AG04450 (cell line): ENCODE measurements at regions of chr9 and their contacts with region 1.

Region 1: DNA sequence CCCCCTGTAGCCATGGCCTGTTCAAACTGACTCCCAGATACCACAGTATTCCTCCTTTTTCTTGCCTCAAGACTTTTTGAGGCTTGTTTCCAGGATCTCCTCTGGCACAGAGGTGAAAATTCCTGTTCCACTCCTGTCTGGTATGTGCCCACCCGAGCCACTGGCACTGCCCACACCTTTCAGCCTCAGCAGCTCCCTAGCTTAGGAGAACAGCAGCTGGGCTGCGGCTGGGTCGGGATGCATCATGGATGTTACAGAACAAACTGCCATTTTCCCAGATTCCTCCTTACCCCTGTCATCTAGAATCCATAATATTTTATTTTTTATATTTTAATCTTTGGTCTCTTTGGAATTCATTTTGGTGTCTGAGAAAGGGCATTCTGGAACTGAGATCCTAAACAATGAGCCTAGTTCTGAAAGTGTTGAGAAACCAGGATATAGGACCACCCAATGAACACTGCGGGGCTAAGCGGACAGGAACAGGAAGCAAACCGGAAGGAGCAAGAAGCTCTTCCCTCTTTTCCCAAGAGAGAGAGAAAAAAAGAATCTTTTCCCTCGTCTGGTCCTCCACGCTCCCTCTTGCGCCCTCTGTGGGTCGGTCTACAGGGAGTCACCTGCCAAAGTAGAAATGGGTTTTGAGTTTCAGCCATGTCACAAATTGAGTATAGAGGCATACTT is 12.5 kb downstream of the OR2S2 start:
- DNase-seq: peak; percentile 63
- H3K4me3 ChIP-seq: no peak overlapping the region
- H3K27ac ChIP-seq: peak overlapping the region; percentile 22
- H3K27me3 ChIP-seq: no peaks in the 10 kb centered on the region
- CTCF ChIP-seq: peak; percentile 96

Region 2: DNA sequence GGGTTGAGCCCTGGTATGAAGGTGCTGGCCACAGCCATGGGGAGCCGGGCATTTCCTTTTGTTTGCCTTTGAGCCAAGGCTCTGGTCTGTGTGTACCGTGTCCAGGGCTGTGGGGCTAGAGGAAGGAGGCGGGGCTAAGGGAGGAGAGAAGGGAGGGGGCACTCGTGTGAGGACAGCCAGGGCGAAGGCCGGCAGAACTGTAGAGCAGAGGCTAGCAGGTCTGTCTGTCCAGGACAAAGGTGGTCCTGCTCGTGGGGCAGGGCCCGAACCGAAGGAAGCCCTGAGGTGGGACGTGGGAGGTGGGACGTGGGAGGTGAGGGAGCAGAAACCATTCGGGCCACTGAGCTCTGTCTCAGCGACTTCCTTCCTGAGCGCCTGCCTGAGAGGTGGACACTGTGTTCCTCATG is 381.7 kb before region 1 on chr9:
- CTCF ChIA-PET with region 1: no interaction called
- POLR2A ChIA-PET with region 1: no interaction called
- DNase-seq: no peak
- H3K4me3 ChIP-seq: no peak overlapping the region
- H3K27ac ChIP-seq: no peak overlapping the region
- H3K27me3 ChIP-seq: no peaks in the 10 kb centered on the region
- CTCF ChIP-seq: no peak

Region 3: GRCh38 chr9:35790385-35791296 is 154.8 kb before region 1 on chr9:
- CTCF ChIA-PET with region 1: interaction called, 35 read pairs
- POLR2A ChIA-PET with region 1: interaction called, 4 read pairs
- DNase-seq: peak; percentile 65
- H3K4me3 ChIP-seq: no peak overlapping the region
- H3K27ac ChIP-seq: peak overlapping the region; percentile 31
- H3K27me3 ChIP-seq: peaks cover 3% of the 10 kb centered on the region
- CTCF ChIP-seq: peak; percentile 91

Region 4: DNA sequence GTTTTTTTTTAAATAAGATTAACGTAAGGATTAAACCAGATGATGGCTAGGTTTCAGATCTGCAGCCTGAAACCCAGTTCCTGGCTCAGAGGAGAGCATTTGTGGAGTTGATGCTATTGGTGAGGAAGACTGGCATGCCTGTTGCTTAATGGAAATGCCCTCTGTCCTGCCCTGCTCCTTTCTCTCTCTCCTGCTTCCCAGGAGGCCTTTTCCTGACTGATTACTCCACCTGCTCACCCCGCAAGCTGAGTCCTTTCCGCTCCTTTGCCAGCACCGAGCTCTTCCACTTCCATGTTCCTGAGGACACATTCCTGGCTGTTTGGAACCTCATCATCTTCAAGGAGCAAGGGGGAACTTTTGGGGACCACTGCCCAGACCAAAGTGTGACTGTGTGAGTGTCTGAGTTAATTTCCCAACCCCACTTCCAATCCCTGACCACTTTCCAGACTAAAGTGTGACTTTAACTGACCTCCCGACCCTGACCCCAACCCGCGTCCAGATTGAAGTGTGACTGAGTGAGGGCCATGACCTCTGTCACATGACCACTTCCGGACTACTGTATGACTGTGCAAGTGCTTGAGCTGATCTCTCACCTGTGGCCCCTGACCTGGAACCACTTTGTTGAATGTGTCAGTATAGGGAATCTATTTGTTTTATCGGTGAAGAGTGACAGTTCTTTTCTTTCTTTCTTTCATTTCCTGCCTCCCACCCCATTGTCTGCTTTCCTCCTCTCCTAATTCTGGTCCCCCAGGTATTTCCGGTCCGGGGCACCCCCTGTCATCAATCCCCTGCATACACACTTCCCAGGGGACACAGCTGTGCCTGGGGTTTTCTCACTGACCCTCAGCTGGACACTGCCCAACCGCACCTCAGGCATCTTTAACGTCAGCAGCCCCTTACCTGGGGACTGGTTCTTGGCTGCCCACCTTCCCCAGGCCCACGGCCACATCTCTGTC is 110.9 kb before region 1 on chr9:
- CTCF ChIA-PET with region 1: no interaction called
- POLR2A ChIA-PET with region 1: no interaction called
- DNase-seq: no peak
- H3K4me3 ChIP-seq: no peak overlapping the region
- H3K27ac ChIP-seq: no peak overlapping the region
- H3K27me3 ChIP-seq: no peaks in the 10 kb centered on the region
- CTCF ChIP-seq: no peak

Region 5: DNA sequence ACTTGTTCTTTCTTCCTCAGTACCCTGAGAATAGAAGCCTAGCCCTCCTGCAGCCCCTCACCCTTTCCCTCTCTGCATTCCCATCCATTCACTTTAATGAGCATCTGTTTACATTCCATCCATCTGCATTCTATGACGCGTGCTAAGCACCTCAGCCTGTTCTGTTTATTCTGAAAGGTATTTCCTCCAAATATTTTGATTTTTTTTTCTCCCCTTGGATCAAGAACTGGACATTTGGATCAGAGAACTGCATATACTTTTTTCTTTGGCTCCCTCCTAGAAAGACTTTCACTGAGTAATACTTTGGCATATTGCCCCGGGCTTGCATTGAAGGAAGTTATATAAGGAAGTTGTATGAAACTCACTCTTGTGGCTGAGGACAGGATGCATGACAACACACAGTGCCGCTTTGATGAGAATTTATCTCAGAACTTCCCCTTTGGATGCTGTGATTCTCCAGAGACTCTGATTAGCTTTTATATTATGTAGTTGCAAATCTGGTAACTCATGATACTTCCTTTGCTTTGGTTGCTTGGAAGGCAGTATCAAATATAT is 100.7 kb before region 1 on chr9:
- CTCF ChIA-PET with region 1: no interaction called
- POLR2A ChIA-PET with region 1: no interaction called
- DNase-seq: peak; percentile 77
- H3K4me3 ChIP-seq: no peak overlapping the region
- H3K27ac ChIP-seq: peak overlapping the region; percentile 75
- H3K27me3 ChIP-seq: no peaks in the 10 kb centered on the region
- CTCF ChIP-seq: no peak

Region 6: GRCh38 chr9:35903049-35903448 is 42.4 kb before region 1 on chr9:
- CTCF ChIA-PET with region 1: interaction called, 153 read pairs
- POLR2A ChIA-PET with region 1: interaction called, 10 read pairs
- DNase-seq: no peak
- H3K4me3 ChIP-seq: no peak overlapping the region
- H3K27ac ChIP-seq: no peak overlapping the region
- H3K27me3 ChIP-seq: peaks cover 10% of the 10 kb centered on the region
- CTCF ChIP-seq: peak; percentile 54

Region 7: DNA sequence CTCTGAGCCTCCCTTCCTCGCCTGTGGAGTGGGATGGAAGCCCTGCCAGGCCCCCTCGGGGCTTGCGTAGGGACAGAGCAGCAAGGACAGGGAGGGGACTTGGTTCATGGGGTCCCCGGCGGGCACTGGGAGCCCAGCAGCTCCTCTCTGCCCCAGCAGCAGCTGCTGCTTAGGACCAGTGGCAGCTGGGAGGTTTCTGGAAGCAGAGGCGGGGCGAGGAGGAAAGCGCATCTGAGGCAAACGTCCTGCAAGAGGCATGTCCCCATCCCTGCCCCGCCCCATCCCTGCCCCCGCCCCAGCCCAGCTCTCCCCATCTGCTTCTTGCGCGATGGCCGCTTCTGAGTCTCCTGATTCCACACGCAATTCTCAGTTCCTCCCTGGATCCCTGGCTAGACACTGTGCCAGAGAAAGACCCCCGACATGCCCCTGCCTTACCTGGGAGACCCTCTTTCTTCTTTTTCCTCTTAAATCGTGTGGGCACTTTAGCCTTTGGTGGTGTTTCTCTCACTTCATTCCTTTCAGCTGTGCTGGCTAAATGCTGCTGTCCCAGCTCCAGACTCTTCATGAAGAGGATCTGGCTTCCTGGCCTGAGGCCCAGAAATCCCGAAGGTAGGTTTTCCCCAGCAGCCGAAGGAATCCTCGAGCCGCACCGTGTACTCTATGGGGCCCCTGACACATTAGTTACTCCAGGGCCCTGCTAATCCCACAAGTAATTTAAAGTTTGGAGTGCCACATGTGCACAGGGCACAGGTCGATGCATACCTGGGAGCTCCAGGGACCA is 16.8 kb after region 1 on chr9:
- CTCF ChIA-PET with region 1: interaction called, 33 read pairs
- POLR2A ChIA-PET with region 1: no interaction called
- DNase-seq: peak; percentile 49
- H3K4me3 ChIP-seq: peak overlapping the region; percentile 38
- H3K27ac ChIP-seq: peak overlapping the region; percentile 71
- H3K27me3 ChIP-seq: no peaks in the 10 kb centered on the region
- CTCF ChIP-seq: no peak

Region 8: DNA sequence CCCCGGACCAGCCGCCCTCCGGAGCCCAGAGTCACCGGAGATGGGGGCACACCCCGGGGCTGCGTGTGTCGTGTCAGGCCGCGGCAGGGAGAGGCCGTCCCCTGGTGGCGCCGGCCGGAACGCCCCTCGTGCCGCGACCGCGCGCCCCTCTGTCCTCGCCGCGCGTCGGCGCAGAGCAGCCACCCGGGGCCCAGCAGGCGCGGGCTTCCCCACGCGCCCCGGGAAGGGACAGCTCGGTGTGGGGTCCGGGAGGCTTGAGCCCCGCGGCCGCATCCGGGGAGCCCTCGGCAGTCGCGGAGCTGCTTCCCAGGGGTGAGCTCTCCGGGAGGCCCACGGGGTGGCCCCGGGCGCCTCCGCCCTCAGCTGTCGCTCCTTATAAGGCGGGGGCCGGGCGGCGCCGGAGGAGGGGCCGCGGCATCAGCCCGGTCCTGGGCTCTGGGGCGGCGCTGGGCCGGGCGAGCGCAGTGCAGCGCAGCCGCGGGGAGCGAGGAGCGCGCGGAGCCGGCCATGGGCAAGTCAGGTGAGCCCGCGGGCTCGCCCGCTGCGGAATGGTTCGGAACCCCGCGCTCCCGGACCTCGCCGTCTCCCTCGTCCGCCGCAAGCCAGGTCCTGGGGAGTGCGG is 190.9 kb after region 1 on chr9 and contains the start of gene GLIPR2:
- CTCF ChIA-PET with region 1: interaction called, 3 read pairs
- POLR2A ChIA-PET with region 1: interaction called, 10 read pairs
- DNase-seq: no peak
- H3K4me3 ChIP-seq: peak within 1 kb of the TSS; percentile 76
- H3K27ac ChIP-seq: peak within 1 kb of the TSS; percentile 39
- H3K27me3 ChIP-seq: no peaks in the 10 kb centered on the region
- CTCF ChIP-seq: no peak
- polyA plus RNA-seq, gene GLIPR2: 108 and 115 TPM in 2 replicates